Cardiac septum (tissue), 1 donor: ENCODE measurements at regions of chr5 and their contacts with region 1.

Region 1: DNA sequence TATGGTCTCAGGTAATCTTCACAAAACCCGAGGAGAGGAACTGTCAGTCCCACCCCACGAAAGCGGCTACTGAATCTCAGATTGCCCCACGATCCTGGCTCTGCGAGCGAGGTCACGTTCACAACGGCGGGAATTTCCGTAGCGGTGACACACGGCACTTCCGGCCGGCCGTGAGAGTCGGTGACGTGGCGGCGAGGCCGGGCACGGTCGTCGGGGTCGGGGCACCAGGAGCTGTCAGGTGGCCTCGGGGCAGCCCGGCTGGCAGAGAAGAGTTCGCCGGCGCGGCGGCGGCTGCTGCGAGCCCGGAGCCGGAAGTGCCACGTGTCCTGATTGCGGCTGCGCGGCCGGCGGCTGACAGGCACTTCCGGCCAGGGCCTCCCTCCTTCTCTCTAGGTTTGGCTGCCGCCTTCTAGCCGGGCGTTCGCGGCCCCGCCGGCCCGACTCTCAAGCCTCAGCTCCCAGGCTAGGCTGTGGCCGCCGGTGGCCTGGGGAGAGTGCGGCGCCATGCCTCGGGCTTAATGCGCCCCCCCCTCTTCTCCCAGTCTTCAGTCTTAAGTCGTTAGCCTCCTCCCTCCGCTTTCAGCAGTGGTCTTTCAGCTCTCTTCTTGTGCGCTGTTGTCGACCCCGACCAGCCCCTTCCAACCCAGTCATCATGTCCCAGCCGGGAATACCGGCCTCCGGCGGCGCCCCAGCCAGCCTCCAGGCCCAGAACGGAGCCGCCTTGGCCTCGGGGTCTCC is at the start of gene SEC24A:
- DNase-seq: peak; percentile 94
- total RNA-seq, gene SEC24A: 12.4 TPM

Region 2: DNA sequence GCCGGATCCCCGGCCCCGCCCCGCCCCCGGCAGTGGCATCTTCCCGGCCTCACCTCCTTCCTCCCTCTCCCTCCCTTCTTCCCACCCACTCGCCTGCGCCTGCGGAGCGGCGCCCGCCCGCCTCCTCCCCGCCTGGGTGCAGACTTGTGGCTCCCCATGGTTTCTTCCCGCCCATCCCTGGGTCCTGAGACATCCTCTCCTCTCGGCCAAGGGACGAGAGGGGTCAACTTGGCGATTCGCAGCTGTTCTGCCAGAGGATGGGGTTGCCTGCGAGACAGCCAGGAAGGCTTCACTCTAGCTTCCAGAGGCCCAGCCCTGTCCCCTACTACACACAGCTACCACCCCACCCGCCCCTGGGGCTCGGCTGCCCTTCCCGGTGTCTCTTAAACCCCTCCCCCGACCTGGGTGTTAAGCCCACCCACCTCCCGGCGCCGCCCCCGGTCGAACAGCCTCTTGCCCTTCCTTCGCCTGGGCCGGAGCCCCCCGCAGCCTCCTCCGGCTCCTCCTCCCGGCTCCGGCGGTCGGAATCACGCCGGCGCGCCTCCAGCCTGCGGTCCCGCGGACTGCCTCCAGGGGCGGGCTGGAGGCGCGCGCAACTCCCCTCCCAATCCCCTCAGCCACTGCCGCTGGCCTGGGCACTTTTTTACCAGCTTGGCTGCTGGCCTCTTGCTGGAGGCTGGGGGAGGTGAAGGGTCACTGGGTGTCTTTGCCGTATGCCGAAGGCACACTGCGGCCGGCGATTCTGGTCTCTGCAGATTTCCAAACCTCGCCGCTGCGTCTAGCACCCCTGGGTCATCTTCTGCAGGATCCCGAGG is 121.2 kb before region 1 on chr5:
- intact Hi-C with region 1: no loop called
- DNase-seq: peak; percentile 93

Region 3: DNA sequence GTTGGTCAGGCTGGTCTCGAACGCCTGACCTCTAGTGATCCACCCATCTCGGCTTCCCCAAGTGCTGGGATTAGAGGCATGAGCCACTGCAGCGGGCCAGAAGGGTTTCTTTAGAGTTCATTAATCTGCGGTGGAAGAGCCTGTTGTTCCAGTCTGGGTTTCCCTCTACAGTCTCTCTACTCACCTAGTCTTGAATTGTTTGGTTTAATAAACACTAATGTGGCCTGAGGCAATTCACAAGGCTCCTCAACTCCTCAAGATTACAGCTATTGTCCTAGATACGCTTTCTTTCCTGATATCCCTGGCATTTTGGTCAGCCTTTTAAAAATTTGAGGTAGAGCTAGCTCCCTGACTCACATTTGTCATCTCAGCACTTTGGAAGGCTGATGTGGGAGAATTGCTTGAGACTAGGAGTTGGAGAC is 11.4 kb before region 1 on chr5:
- intact Hi-C with region 1: loop called (anchors 1 kb)
- DNase-seq: no peak

Region 4: DNA sequence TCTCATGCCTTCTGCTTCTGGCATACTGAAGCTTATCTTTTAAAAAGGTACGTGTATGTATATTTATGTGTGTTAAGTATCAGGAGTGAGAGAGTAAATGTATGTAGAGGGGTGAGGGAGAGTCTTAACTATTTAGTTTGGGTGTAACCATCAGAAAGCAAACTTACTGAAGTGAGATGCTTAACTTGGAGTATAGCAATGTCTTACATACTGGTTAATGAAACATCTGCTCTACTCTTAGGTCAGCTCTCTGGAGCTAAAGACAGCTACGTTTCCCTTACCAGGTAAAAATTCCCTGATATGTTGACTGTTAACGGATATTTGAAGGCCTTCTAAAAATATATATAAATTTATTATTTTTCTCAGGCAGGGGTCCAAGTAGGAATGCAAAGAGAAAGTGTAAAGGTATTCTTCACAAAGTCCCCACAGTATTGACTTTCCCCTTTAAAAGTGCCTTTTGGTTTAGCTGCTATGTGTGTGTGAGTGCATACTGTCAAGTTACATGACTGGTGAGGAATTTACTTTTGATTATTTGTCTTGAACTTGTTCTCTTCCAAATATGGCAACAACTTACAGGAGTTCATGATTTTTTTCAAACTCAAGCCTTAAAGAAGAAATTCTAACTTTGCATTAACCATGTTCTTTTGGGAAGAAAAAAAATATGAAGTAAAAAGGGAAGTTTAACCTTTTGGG is 184.9 kb after region 1 on chr5:
- intact Hi-C with region 1: no loop called
- DNase-seq: no peak